RWPE1 (cell line): ENCODE measurements at regions of chr12 and their contacts with region 1.

Region 1: DNA sequence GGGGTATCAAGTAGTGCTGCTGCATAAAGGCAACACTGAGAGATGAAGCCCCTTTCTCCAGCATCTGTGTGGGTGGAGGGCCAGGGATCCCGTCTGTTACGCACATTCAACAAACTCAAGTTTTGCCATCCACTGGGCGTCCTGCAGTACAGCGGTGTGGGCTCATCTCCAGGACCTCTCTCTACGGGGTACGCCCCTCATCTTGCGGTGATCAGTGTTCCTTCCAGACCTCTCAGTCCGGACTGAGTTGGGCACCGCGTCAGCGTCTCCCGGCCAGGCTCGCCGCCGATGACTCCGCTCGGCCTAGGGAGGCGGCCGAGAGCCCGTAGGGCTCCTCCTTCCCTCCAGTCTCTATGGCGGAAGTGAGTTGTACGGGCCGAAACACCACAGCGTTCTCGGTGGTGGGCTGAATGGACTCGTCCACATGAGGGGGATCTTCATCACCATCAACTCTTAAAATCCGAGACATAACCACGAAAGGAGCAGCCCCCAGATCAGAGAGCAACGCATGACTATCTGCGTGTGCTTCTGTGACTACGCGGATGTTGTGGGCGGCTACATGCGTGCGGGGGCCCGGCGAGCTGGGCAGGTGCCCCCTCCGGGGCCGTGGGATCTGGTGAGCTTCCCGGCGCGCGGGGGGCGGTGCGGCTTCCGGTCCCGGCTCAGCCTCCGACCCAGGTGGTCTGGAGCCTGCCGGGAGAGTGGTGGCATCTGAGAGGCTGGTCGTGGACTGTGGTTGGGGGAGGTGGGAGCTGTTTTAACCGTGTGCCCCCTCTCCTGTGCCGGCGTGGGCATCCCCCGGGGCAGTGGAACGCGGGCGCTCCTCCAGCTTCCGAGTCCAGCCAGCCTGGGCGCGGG is at the start of gene ATG101:
- DNase-seq: peak; percentile 95
- H3K27ac ChIP-seq: peak within 1 kb of the TSS; percentile 78
- CTCF ChIP-seq: peak; percentile 88

Region 2: DNA sequence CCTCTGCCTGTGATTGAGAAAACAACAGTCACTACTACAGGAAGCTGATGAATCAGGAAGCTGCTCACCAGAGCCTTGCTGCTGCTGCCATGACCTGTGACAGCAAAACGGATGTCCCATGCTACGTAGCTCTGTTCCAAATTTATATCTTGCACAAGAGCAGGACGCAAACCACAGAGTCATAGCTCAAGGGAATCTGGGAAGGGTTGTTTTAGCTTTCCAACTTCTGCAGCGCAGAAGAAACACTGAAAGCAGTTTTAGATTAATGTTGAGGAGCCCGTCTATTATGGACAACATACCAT is 183.6 kb before region 1 on chr12:
- CTCF ChIA-PET with region 1: no interaction called
- POLR2A ChIA-PET with region 1: no interaction called
- DNase-seq: peak; percentile 55
- H3K27ac ChIP-seq: no peak overlapping the region
- CTCF ChIP-seq: no peak

Region 3: GRCh38 chr12:52044261-52044983 is 25.1 kb before region 1 on chr12:
- CTCF ChIA-PET with region 1: interaction called, 10 read pairs
- POLR2A ChIA-PET with region 1: no interaction called
- DNase-seq: no peak
- H3K27ac ChIP-seq: peak overlapping the region; percentile 15; the same call in 1 of the 2 replicates
- CTCF ChIP-seq: no peak

Region 4: DNA sequence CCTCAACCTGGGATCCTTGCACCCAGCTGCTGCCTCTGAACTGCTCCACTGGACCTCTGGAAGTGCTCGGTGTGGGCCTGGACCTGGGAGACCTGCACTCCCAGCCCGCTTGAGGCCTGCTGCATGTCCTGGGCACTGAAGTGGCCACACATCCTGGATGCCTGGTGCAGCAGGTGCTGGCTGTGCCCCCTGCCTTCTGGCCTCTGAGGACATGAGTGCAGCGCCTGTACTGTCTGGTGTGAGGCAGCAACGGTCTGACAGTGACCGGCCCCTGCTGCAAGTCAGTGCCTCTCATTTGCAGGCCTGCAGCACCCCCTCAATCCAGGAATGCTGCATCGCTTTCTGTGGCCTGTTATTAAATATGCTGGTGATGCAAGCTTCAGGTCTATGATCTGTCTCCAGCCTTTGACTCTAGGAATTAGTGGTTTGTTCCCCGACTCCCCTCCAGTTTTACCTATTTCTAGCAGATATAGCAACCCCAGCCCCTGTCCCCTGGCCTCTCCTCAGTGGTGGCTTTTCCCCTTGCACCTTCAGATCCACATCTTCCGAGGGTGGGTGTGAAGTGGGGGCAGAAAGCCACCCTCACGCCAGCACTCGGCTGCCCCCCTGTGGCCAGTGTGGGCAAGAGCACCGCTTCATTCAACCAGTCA is 13.6 kb after region 1 on chr12:
- CTCF ChIA-PET with region 1: interaction called, 13 read pairs
- POLR2A ChIA-PET with region 1: no interaction called
- DNase-seq: peak; percentile 69
- H3K27ac ChIP-seq: no peak overlapping the region; the same call in 1 of the 2 replicates
- CTCF ChIP-seq: peak; percentile 98